ENCODE measurements at regions of chr17 and their contacts with region 1.

Region 1: GRCh38 chr17:1481736-1482135 is 10.8 kb downstream of the MYO1C start:
- DNase-seq: no peak
- ATAC-seq: no peak
- H3K4me3 ChIP-seq: no peak overlapping the region
- H3K4me3 Mint-ChIP-seq: no peak overlapping the region
- H3K27ac ChIP-seq: no peak overlapping the region
- H3K27ac Mint-ChIP-seq: no peak overlapping the region
- H3K4me1 ChIP-seq: peaks cover 7 to 19% of the 10 kb centered on the region in 2 experiments
- H3K4me1 Mint-ChIP-seq: peaks cover 5 to 11% (median 6%) of the 10 kb centered on the region in 3 donors
- H3K27me3 ChIP-seq: peaks cover 0 to under 1% of the 10 kb centered on the region in 2 experiments
- H3K27me3 Mint-ChIP-seq: no peaks in the 10 kb centered on the region

Region 2: GRCh38 chr17:1420163-1420562 is 61.6 kb before region 1 on chr17:
- CTCF ChIA-PET with region 1: no interaction called
- POLR2A ChIA-PET with region 1: interaction called in 1 of 2 experiments, 12 read pairs
- DNase-seq: no peak
- ATAC-seq: no peak
- H3K4me3 ChIP-seq: no peak overlapping the region
- H3K4me3 Mint-ChIP-seq: no peak overlapping the region
- H3K27ac ChIP-seq: no peak overlapping the region
- H3K27ac Mint-ChIP-seq: no peak overlapping the region
- H3K4me1 ChIP-seq: no peaks in the 10 kb centered on the region
- H3K4me1 Mint-ChIP-seq: no peaks in the 10 kb centered on the region
- H3K27me3 ChIP-seq: no peaks in the 10 kb centered on the region
- H3K27me3 Mint-ChIP-seq: no peaks in the 10 kb centered on the region

Region 3: GRCh38 chr17:1627182-1627986 is 145.6 kb after region 1 on chr17:
- CTCF ChIA-PET with region 1: no interaction called
- POLR2A ChIA-PET with region 1: no interaction called
- DNase-seq: peak in 3 of 35 experiments; percentile 16 to 42 (median 23)
- ATAC-seq: no peak
- H3K4me3 ChIP-seq: peak overlapping the region; percentile 75 to 80
- H3K4me3 Mint-ChIP-seq: peak overlapping the region; percentile 76 to 92 (median 83)
- H3K27ac ChIP-seq: no peak overlapping the region
- H3K27ac Mint-ChIP-seq: peak overlapping the region; percentile 28 to 79
- H3K4me1 ChIP-seq: peaks cover 9 to 28% of the 10 kb centered on the region in 2 experiments
- H3K4me1 Mint-ChIP-seq: peaks cover 16 to 27% (median 24%) of the 10 kb centered on the region in 3 donors
- H3K27me3 ChIP-seq: peaks cover 0 to 25% of the 10 kb centered on the region in 2 experiments
- H3K27me3 Mint-ChIP-seq: peaks cover 0 to 7% of the 10 kb centered on the region in 2 donors

Measured in T-cell (primary cell).